Activated CD4-positive, alpha-beta memory T cell treated with anti-CD3 and anti-CD28 coated beads for 36 hours (primary cell): ENCODE measurements at regions of chr12 and their contacts with region 1.

Region 1: GRCh38 chr12:15575671-15576541 is 213.3 kb downstream of the EPS8 start:
- DNase-seq: no peak
- H3K4me3 Mint-ChIP-seq: no peak overlapping the region
- H3K27ac Mint-ChIP-seq: peak overlapping the region; percentile 7
- H3K4me1 Mint-ChIP-seq: peaks cover 39% of the 10 kb centered on the region
- H3K27me3 Mint-ChIP-seq: no peaks in the 10 kb centered on the region

Region 2: DNA sequence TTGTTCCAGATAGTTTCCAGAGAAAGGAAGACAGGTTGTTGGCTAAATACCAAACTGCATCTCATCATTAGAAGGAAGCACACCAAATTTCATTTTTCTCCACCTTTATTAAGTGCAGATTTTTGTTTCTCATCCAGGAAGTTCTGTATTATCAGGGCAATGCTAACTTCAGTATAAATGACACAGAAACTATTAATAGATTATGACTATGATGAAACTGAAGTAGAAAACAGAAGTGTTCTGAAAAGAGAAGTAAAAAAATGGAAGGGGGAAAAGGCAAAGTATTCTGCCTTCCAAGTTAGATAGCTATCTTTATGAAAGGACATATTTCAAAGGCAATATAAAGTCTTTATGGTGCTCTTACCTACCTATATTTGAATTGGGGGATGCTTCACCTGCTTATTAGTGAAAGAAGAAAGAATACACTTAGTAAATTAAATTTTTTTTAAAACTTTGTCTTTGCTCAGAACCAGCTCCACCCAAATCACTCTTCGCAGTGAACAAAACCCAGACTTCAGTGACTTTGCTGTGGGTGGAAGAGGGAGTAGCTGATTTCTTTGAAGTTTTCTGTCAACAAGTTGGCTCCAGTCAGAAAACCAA is 29.7 kb before region 1 on chr12:
- CTCF ChIA-PET with region 1: interaction called, 7 read pairs
- POLR2A ChIA-PET with region 1: no interaction called
- intact Hi-C with region 1: loop called (anchors 1 kb)
- DNase-seq: peak; percentile 31
- H3K4me3 Mint-ChIP-seq: no peak overlapping the region
- H3K27ac Mint-ChIP-seq: peak overlapping the region; percentile 78
- H3K4me1 Mint-ChIP-seq: peaks cover 53% of the 10 kb centered on the region
- H3K27me3 Mint-ChIP-seq: no peaks in the 10 kb centered on the region